ENCODE measurements at regions of chrX and their contacts with region 1.

Region 1: DNA sequence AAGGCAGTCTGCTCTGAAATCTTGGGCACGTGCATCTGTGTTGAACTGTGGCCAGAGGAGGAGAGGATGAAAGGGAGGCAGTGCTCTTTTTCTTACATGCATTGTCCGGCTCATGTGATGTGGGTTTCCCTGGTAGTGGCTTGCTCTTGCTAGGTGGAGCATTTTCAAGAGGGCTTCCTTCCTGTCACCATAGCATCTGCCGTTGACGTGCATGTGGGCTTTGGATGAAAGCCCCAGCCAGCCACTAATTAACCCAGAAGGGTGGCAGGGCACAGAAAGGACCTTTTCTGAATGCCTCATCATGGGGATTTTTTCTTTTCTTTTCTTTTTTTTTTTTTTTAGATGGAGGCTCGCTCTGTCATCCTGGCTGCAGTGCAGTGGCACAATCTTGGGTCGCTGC is 121.3 kb downstream of the GPR143 start:
- DNase-seq: peak; percentile 47 to 75
- ATAC-seq: peak; percentile 87 to 93 (median 90)
- H3K4me3 ChIP-seq: no peak overlapping the region
- H3K4me3 Mint-ChIP-seq: peak overlapping the region; percentile 50
- H3K27ac ChIP-seq: no peak overlapping the region
- H3K27ac Mint-ChIP-seq: peak overlapping the region; percentile 80 to 84
- H3K4me1 ChIP-seq: peaks cover 33% of the 10 kb centered on the region
- H3K4me1 Mint-ChIP-seq: peaks cover 31 to 38% of the 10 kb centered on the region in 2 donors
- H3K27me3 ChIP-seq: no peaks in the 10 kb centered on the region
- H3K27me3 Mint-ChIP-seq: no peaks in the 10 kb centered on the region
- CTCF ChIP-seq: no peak

Region 2: GRCh38 chrX:9341291-9342201 is 302.8 kb before region 1 on chrX:
- intact Hi-C with region 1: loop called (anchors 5 kb)
- DNase-seq: peak; percentile 35 to 80
- ATAC-seq: peak; percentile 43 to 72 (median 56)
- H3K4me3 ChIP-seq: peak overlapping the region; percentile 28
- H3K4me3 Mint-ChIP-seq: peak overlapping the region; percentile 92
- H3K27ac ChIP-seq: peak overlapping the region; percentile 89
- H3K27ac Mint-ChIP-seq: peak overlapping the region; percentile 98
- H3K4me1 ChIP-seq: peaks cover 33% of the 10 kb centered on the region
- H3K4me1 Mint-ChIP-seq: peaks cover 34 to 39% of the 10 kb centered on the region in 2 donors
- H3K27me3 ChIP-seq: no peaks in the 10 kb centered on the region
- H3K27me3 Mint-ChIP-seq: no peaks in the 10 kb centered on the region
- CTCF ChIP-seq: no peak

Region 3: DNA sequence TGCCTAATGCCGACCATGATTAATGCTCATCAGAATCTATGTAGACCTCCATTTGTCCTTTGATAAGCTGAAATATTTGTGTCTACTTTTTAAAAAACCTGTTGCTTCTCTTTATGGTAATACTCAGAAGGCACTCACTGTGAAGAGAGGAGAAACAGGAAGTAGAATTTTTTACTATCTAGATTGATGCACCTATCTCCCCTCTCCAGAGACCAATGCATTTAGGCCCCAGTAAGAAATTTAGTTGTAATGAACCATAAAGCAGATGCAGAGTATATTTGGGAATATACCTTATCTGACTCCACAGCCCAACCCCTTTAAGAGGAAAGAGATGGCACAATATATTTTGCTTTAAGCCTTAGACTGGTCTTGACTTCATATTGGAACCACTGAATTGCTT is 168.4 kb before region 1 on chrX:
- intact Hi-C with region 1: loop called (anchors 5 kb)
- DNase-seq: no peak
- ATAC-seq: peak in 2 of 3 donors; percentile 24 to 38
- H3K4me3 ChIP-seq: no peak overlapping the region
- H3K4me3 Mint-ChIP-seq: peak overlapping the region; percentile 8
- H3K27ac ChIP-seq: peak overlapping the region; percentile 52
- H3K27ac Mint-ChIP-seq: peak overlapping the region; percentile 81 to 89
- H3K4me1 ChIP-seq: peaks cover 11% of the 10 kb centered on the region
- H3K4me1 Mint-ChIP-seq: peaks cover 36 to 44% of the 10 kb centered on the region in 2 donors
- H3K27me3 ChIP-seq: no peaks in the 10 kb centered on the region
- H3K27me3 Mint-ChIP-seq: no peaks in the 10 kb centered on the region
- CTCF ChIP-seq: no peak

Region 4: GRCh38 chrX:9530848-9531274 is 113.5 kb before region 1 on chrX:
- intact Hi-C with region 1: loop called (anchors 5 kb)
- DNase-seq: peak; percentile 34 to 79
- ATAC-seq: peak; percentile 88 to 98 (median 95)
- H3K4me3 ChIP-seq: no peak overlapping the region
- H3K4me3 Mint-ChIP-seq: peak overlapping the region; percentile 82
- H3K27ac ChIP-seq: no peak overlapping the region
- H3K27ac Mint-ChIP-seq: peak overlapping the region; percentile 77 to 81
- H3K4me1 ChIP-seq: peaks cover 9% of the 10 kb centered on the region
- H3K4me1 Mint-ChIP-seq: peaks cover 36 to 50% of the 10 kb centered on the region in 2 donors
- H3K27me3 ChIP-seq: no peaks in the 10 kb centered on the region
- H3K27me3 Mint-ChIP-seq: no peaks in the 10 kb centered on the region
- CTCF ChIP-seq: no peak

Region 5: GRCh38 chrX:9677098-9677739 is 32.9 kb after region 1 on chrX:
- intact Hi-C with region 1: loop called (anchors 1 kb)
- DNase-seq: peak in 1 of 2 donors; percentile 49
- ATAC-seq: peak; percentile 88 to 95 (median 94)
- H3K4me3 ChIP-seq: no peak overlapping the region
- H3K4me3 Mint-ChIP-seq: peak overlapping the region; percentile 54
- H3K27ac ChIP-seq: peak overlapping the region; percentile 73
- H3K27ac Mint-ChIP-seq: peak overlapping the region; percentile 79 to 91
- H3K4me1 ChIP-seq: peaks cover 16% of the 10 kb centered on the region
- H3K4me1 Mint-ChIP-seq: peaks cover 37 to 42% of the 10 kb centered on the region in 2 donors
- H3K27me3 ChIP-seq: no peaks in the 10 kb centered on the region
- H3K27me3 Mint-ChIP-seq: no peaks in the 10 kb centered on the region
- CTCF ChIP-seq: no peak